ENCODE measurements at regions of chr12 and their contacts with region 1.

Region 1: GRCh38 chr12:96578526-96579125 is 89.2 kb downstream of the CFAP54 start:
- H3K4me3 Mint-ChIP-seq: no peak overlapping the region
- H3K27ac Mint-ChIP-seq: no peak overlapping the region
- H3K4me1 Mint-ChIP-seq: no peaks in the 10 kb centered on the region
- H3K27me3 Mint-ChIP-seq: no peaks in the 10 kb centered on the region

Region 2: GRCh38 chr12:96590970-96591369 is 12.3 kb after region 1 on chr12:
- intact Hi-C with region 1: no loop called
- H3K4me3 Mint-ChIP-seq: no peak overlapping the region
- H3K27ac Mint-ChIP-seq: no peak overlapping the region
- H3K4me1 Mint-ChIP-seq: no peaks in the 10 kb centered on the region
- H3K27me3 Mint-ChIP-seq: peaks cover 6% of the 10 kb centered on the region

Region 3: DNA sequence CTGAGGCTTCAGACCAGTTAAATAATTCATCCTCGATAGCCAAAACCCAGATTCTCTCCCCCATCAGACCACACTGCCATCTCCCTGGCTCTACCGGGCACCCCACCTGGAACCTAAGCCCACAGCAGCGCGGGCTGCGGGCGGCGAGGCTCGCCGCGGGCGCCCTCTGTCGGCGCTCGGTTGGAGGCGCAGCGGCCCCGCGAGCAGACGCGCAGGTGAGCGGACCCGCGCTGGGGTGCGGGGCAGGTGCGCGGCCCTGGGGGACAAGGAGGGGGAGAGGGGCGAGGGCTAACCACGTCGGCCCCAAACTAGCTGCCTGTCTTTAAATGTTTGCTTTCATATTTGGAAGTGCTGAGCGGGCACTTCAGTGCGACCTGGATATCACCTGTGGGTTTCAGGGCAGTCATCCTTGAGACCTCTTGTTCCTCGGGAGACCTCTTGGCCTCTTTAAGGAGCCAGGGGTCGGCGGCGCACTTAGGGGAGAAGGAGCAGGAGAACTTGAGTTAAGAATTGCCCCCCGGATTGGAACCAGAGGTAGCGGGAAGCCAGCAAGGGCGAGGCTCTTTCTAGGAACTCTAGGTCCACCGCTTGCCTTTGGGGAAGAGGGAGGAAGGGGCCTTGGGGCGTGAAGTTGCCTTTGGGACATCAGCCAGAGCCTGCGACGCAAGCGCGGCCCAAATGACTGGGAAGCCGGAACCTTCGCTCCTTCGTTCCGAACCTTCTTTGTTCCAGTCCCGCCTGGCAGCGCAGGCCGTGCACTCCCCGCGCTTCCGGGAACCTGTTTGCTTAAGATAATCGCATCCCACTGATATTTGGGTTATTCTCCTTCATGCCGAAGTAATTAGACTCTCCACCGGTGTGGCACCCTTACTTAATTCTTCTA is 407.1 kb after region 1 on chr12:
- intact Hi-C with region 1: loop called (anchors 2 kb)
- H3K4me3 Mint-ChIP-seq: peak overlapping the region; percentile 30
- H3K27ac Mint-ChIP-seq: no peak overlapping the region
- H3K4me1 Mint-ChIP-seq: peaks cover 10% of the 10 kb centered on the region
- H3K27me3 Mint-ChIP-seq: peaks cover 19% of the 10 kb centered on the region

Region 4: DNA sequence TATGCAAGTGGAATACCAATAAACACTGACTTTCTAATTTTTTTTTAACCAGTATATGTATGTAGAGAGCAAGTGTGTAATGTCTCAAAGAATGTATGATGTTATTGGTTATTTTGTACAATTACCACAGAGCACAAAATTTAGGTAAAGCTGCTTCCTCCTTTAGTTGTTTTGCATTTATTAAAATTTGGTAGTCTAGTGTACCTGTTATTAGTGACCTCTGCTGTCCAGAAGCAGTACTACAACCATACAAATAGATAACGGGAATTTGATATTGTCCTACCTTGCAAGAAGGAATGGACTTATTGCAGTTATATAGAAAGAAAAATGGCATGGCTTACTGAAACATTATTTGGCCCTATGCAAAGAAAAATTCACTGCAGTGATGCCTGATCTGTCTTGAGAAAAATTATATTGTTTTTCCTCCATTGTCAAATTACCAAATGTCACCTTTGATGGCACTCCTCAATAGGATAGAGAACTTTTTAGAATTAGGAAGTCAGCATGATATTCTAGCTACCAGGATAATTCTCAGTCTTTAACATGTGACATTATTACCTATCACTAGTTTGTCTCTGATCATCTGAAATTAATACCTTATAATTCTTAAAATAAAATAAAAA is 730.1 kb after region 1 on chr12:
- intact Hi-C with region 1: loop called (anchors 2 kb)
- H3K4me3 Mint-ChIP-seq: no peak overlapping the region
- H3K27ac Mint-ChIP-seq: no peak overlapping the region
- H3K4me1 Mint-ChIP-seq: peaks cover 6% of the 10 kb centered on the region
- H3K27me3 Mint-ChIP-seq: peaks cover 2% of the 10 kb centered on the region

Region 5: DNA sequence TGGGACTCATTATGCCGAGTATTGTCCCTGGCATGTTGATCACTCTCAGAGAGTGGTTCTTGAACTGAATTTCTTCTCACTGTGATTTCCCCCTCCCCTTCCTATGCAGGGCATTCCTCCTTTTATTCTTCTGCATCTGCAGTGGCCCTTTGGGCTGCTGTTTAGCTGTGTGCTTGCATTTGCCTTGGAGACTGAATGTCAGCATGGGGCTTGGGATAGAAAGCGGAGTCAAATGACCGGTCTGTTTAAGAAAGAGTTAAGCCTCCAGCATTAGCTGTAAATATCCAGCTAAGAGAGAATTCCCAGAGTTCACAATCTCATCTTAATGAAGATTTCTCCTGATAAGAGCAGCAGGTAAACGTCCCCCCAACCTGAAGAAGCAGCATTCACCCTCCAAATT is 818.4 kb after region 1 on chr12:
- intact Hi-C with region 1: loop called (anchors 5 kb)
- H3K4me3 Mint-ChIP-seq: no peak overlapping the region
- H3K27ac Mint-ChIP-seq: no peak overlapping the region
- H3K4me1 Mint-ChIP-seq: no peaks in the 10 kb centered on the region
- H3K27me3 Mint-ChIP-seq: no peaks in the 10 kb centered on the region

Region 6: DNA sequence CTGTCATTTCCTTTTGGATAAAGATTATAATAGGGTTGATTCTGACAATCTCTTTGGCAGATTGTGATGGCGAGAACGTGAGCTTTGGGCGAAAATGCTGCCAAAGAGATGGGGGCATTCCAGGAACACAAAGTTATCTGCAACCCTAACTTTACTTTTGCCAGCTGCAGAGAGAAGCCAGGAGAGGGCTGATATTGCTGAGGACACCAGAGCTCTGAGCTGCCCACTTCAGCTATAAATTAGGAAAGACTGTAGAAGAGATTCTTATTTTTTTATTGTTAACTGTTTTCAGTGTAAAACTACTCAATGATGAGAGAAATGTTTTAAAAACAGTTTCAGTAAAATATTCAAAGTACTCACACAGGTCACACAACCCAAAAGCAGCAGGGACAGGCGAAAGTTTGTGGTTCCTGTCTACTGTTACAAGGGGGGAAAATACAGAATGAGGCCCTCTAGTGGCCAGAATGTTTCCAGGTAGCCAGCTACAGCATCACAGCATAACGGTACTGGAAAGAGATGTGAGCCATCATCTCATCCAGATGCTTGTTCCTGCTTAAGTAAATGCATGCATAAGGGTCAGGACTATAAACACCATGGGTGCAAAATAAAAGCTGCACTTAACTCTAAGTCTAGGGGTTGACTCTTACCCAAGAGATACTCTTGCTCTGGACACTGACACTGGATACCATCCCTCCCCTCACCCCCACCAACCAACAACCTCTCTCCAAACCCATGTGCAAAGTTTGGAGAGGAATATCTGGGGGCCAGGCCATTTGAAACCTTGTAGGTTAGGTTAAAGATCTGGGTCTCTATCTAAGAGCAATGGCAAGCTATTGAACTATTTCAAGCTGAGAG is 1382.4 kb after region 1 on chr12:
- intact Hi-C with region 1: loop called (anchors 2 kb)
- H3K4me3 Mint-ChIP-seq: no peak overlapping the region
- H3K27ac Mint-ChIP-seq: no peak overlapping the region
- H3K4me1 Mint-ChIP-seq: no peaks in the 10 kb centered on the region
- H3K27me3 Mint-ChIP-seq: no peaks in the 10 kb centered on the region

Region 7: DNA sequence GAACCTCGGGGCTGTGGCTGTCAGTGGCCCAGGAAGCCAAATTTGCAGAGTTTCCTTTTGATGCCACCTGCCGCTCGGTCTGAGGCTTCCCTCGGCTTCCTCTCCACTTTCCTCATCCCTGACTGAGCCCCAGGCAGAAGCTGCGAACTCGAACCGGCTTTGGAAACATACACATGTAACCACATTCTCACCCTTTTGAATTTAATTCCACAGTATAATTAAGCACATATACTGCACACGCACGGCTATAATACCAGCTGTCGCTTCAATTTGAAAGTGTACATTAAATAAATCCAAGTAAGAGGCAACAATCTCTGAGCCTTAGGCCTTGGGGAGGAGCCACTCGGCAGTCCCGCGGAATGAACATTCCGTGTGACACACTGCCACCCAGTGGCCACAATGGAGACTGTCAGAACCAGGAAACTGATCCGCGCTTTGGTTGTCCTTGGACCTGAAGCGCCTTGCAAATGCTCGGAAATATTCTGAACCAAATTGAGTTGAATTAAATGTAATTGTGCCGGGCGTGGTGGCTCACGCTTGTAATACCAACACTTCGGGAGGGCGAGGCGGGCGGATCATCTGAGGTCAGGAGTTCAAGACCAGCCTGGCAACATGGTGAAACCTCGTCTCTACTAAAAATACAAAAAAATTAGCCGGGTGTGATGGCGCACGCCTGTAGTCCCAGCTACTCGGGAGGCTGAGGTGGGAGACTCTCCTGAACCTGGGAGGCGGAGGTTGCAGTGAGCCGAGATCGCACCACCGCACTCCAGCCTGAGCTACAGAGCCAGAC is 1818.9 kb after region 1 on chr12:
- intact Hi-C with region 1: loop called (anchors 10 kb)
- H3K4me3 Mint-ChIP-seq: peak overlapping the region; percentile 63
- H3K27ac Mint-ChIP-seq: no peak overlapping the region
- H3K4me1 Mint-ChIP-seq: peaks cover 32% of the 10 kb centered on the region
- H3K27me3 Mint-ChIP-seq: no peaks in the 10 kb centered on the region

Measured in dendritic cell treated with granulocyte-macrophage colony-stimulating factor and Interleukin-4, amounts not matched to agents 40 ng/mL and 50 ng/mL, for 4 days (primary cell).